CD8-positive, alpha-beta T cell (primary cell): ENCODE measurements at regions of chr9 and their contacts with region 1.

Region 1: GRCh38 chr9:121369595-121370265 is at the start of gene STOM:
- DNase-seq: peak in 8 of 9 experiments; percentile 35 to 87 (median 68)
- ATAC-seq: peak; percentile 53
- H3K4me3 ChIP-seq: peak within 1 kb of the TSS; percentile 86 to 96
- H3K4me3 Mint-ChIP-seq: peak within 1 kb of the TSS; percentile 92
- H3K27ac ChIP-seq: peak within 1 kb of the TSS; percentile 67 to 90
- H3K27ac Mint-ChIP-seq: peak within 1 kb of the TSS; percentile 90
- H3K4me1 ChIP-seq: peaks cover 11% of the 10 kb centered on the region
- H3K4me1 Mint-ChIP-seq: peaks cover 66% of the 10 kb centered on the region
- H3K27me3 ChIP-seq: no peaks in the 10 kb centered on the region
- H3K27me3 Mint-ChIP-seq: no peaks in the 10 kb centered on the region
- CTCF ChIP-seq: no peak
- total RNA-seq, gene STOM: 47.4 to 48.2 TPM

Region 2: DNA sequence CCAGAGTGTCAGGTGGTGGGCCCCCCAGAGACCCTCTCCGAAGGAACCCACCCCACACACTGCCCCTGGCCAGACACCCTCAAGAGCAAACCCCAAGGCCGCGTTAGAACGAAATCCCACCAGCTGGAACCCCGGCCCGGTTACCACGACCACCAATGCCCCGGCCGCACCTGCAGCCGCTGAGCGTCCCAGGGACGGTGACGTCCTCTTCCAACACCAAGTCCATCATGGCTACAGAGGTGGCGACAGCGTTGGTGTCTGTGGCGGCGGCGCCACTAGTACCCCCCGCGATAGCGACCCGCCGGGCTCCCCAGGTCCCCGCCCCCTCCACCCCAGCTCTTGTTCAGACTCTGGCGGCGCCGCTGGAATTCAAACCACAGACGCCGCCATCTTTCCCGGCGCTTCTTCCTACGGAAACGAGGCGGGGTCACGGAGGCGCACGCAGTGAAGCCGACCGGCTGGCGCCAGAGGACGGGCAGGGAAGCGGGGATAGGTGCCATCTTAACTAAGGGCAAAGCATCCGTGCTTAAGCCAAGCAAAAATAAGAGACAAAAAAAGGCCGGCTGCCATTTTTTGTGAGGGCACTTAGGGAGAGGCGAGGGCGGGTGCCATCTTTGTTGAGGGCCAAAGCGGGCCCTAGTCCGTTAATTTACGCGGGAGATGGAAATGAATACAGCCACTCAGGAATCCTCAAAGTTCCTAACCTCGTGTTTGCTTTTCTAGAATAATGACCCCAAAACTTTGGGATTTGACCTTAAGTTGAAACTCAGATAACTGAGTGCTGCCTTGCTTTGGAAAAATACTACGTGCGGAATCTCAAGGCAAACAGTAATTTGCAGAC is 789.8 kb before region 1 on chr9 and contains the start of gene CDK5RAP2:
- CTCF ChIA-PET with region 1: no interaction called
- POLR2A ChIA-PET with region 1: no interaction called
- intact Hi-C with region 1: loop called in 1 of 2 experiments (anchors 2 kb)
- DNase-seq: peak; percentile 83 to 98 (median 91)
- ATAC-seq: peak; percentile 98
- H3K4me3 ChIP-seq: peak within 1 kb of the TSS; percentile 63 to 86
- H3K4me3 Mint-ChIP-seq: peak within 1 kb of the TSS; percentile 92
- H3K27ac ChIP-seq: peak within 1 kb of the TSS; percentile 68 to 77
- H3K27ac Mint-ChIP-seq: peak within 1 kb of the TSS; percentile 95
- H3K4me1 ChIP-seq: peaks cover 25% of the 10 kb centered on the region
- H3K4me1 Mint-ChIP-seq: peaks cover 56% of the 10 kb centered on the region
- H3K27me3 ChIP-seq: no peaks in the 10 kb centered on the region
- H3K27me3 Mint-ChIP-seq: no peaks in the 10 kb centered on the region
- CTCF ChIP-seq: no peak
- total RNA-seq, gene CDK5RAP2: 52.1 to 55.2 TPM

Region 3: DNA sequence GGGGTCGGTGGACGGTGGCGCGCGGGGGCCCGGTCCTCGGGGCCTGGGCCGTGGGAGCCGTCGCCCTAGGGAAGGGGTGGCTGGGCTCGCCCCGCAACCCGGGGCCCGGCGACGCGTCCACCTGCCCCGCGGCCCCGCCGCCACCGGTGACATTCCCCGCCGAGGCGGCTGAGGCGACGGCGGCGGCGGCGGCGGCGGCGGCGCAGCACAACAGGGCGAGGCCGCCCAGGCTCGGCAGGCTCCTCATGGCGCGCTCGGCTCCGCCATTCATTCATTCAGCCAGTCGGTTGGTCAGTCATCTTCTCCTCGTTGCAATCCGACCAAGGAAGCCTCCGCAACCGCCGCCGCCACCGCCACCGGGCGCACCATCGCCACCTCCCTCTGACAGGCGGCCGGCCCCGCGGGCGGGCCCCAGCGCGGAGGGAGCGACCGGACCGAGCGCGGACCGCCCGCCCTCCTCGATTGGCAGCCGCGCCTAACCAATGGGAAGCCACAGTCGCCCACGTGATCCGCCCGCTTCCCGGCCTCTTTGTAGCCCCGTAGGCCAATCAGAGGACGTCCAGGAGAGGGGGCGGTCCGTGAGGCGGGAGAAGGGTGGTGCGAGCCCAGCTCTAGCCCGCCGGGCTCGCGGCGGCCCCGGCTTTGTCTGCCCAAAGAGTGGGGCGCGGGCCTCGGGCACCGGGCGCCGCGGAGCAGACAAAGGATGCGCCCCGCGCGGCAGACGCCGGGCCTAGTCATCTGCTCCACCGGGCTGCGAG is 655.5 kb before region 1 on chr9 and contains the start of gene MEGF9:
- CTCF ChIA-PET with region 1: no interaction called
- POLR2A ChIA-PET with region 1: no interaction called
- intact Hi-C with region 1: loop called in 1 of 2 experiments (anchors 2 kb)
- DNase-seq: peak; percentile 89 to 98 (median 96)
- ATAC-seq: peak; percentile 94
- H3K4me3 ChIP-seq: peak within 1 kb of the TSS; percentile 69 to 92
- H3K4me3 Mint-ChIP-seq: peak within 1 kb of the TSS; percentile 83
- H3K27ac ChIP-seq: peak within 1 kb of the TSS; percentile 61 to 64
- H3K27ac Mint-ChIP-seq: peak within 1 kb of the TSS; percentile 86
- H3K4me1 ChIP-seq: peaks cover 38% of the 10 kb centered on the region
- H3K4me1 Mint-ChIP-seq: peaks cover 35% of the 10 kb centered on the region
- H3K27me3 ChIP-seq: no peaks in the 10 kb centered on the region
- H3K27me3 Mint-ChIP-seq: no peaks in the 10 kb centered on the region
- CTCF ChIP-seq: no peak
- total RNA-seq, gene MEGF9: 3.0 to 3.1 TPM

Region 4: DNA sequence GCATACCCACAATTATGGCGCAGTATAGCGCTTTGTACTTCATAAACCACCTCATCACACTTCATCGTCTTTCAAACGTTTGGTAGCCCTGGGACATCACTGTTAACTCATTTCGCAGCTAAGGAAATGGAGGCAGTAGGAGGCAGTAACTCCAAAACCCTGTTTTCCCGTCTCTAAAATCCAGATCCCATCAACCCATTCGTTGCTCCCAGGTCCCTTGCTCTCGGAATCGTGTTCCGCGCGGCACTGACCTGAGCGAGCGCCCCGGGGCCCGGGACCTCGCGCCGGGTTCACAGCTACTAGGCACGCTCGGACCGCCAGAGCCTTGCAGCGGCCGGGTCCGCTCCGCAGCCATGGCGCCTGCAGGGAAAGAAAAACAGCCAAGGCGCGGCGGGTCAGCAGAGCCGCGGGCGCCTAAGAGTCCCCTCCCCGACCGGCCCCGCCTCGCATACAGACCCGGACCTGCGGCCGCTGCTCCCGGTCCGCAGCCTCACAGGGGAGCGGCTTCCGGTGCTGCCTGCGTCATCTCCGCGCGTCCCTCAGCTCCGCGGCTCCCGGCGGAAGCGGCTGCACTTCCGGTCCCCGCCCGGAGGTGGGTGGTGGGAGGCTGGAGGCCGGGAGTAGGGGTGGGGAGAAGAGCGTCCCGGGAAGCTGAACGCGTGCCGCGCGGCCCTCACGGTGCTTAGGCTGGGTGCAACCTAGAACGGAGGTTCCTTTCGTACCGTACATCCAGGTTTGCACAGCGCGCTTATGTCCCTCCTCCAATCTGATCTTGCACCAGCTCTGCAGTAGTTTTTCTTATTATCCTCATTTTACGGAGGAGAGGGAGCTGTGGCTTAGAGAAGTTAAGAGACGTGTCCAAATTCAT is 576.6 kb before region 1 on chr9 and contains the start of gene FBXW2:
- CTCF ChIA-PET with region 1: no interaction called
- POLR2A ChIA-PET with region 1: no interaction called
- intact Hi-C with region 1: loop called in 1 of 2 experiments (anchors 1 kb)
- DNase-seq: peak; percentile 50 to 93 (median 84)
- ATAC-seq: peak; percentile 81
- H3K4me3 ChIP-seq: peak within 1 kb of the TSS; percentile 60 to 88
- H3K4me3 Mint-ChIP-seq: peak within 1 kb of the TSS; percentile 85
- H3K27ac ChIP-seq: peak within 1 kb of the TSS; percentile 88 to 90
- H3K27ac Mint-ChIP-seq: peak within 1 kb of the TSS; percentile 87
- H3K4me1 ChIP-seq: peaks cover 26% of the 10 kb centered on the region
- H3K4me1 Mint-ChIP-seq: peaks cover 60% of the 10 kb centered on the region
- H3K27me3 ChIP-seq: no peaks in the 10 kb centered on the region
- H3K27me3 Mint-ChIP-seq: no peaks in the 10 kb centered on the region
- CTCF ChIP-seq: no peak
- total RNA-seq, gene FBXW2: 51.9 to 54.7 TPM

Region 5: GRCh38 chr9:121201738-121202533 is 167.8 kb before region 1 on chr9 and contains the start of gene RAB14:
- CTCF ChIA-PET with region 1: no interaction called
- POLR2A ChIA-PET with region 1: no interaction called
- intact Hi-C with region 1: loop called (anchors 1 to 5 kb)
- DNase-seq: peak; percentile 100
- ATAC-seq: peak; percentile 90
- H3K4me3 ChIP-seq: peak within 1 kb of the TSS; percentile 77 to 79
- H3K4me3 Mint-ChIP-seq: peak within 1 kb of the TSS; percentile 96
- H3K27ac ChIP-seq: peak within 1 kb of the TSS; percentile 79 to 82
- H3K27ac Mint-ChIP-seq: peak within 1 kb of the TSS; percentile 97
- H3K4me1 ChIP-seq: peaks cover 41% of the 10 kb centered on the region
- H3K4me1 Mint-ChIP-seq: peaks cover 53% of the 10 kb centered on the region
- H3K27me3 ChIP-seq: no peaks in the 10 kb centered on the region
- H3K27me3 Mint-ChIP-seq: no peaks in the 10 kb centered on the region
- CTCF ChIP-seq: no peak
- total RNA-seq, gene RAB14: 58.8 to 60.4 TPM

Region 6: DNA sequence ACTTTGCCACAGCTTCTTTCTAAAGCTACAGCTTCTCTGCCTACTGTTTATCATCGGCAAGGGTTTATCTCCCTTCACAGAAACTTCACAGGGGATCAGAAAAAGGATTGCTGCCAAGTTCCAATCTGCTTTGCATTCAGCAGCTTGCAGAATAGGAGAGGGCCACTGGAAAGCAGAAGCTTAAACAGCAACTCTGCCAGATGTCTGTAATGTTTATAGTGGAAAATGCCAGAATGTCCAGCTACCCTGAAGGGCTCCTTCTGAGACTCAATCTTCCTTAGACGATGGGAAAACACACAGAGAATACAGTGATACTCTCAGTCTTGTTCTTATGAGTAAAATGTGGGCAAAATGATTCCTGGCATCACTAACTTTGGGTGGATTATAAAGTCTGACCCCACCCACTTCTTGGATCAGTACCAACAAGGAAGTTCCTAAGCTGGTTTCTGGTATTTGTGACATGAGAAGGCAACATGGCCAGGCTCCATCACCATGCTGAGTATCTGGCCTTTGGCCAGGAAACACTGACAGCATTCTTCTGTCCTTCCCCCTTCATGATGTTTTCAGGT is 18.7 kb before region 1 on chr9:
- CTCF ChIA-PET with region 1: interaction called, 4 read pairs
- POLR2A ChIA-PET with region 1: interaction called, 8 read pairs
- intact Hi-C with region 1: loop called (anchors 1 kb)
- DNase-seq: no peak
- ATAC-seq: no peak
- H3K4me3 ChIP-seq: no peak overlapping the region
- H3K4me3 Mint-ChIP-seq: no peak overlapping the region
- H3K27ac ChIP-seq: no peak overlapping the region
- H3K27ac Mint-ChIP-seq: no peak overlapping the region
- H3K4me1 ChIP-seq: peaks cover 23% of the 10 kb centered on the region
- H3K4me1 Mint-ChIP-seq: peaks cover 37% of the 10 kb centered on the region
- H3K27me3 ChIP-seq: no peaks in the 10 kb centered on the region
- H3K27me3 Mint-ChIP-seq: no peaks in the 10 kb centered on the region
- CTCF ChIP-seq: no peak

Region 7: GRCh38 chr9:122036988-122037387 is 667.3 kb after region 1 on chr9:
- CTCF ChIA-PET with region 1: no interaction called
- POLR2A ChIA-PET with region 1: no interaction called
- intact Hi-C with region 1: no loop called
- DNase-seq: no peak
- ATAC-seq: no peak
- H3K4me3 ChIP-seq: no peak overlapping the region
- H3K4me3 Mint-ChIP-seq: no peak overlapping the region
- H3K27ac ChIP-seq: no peak overlapping the region
- H3K27ac Mint-ChIP-seq: no peak overlapping the region
- H3K4me1 ChIP-seq: no peaks in the 10 kb centered on the region
- H3K4me1 Mint-ChIP-seq: no peaks in the 10 kb centered on the region
- H3K27me3 ChIP-seq: no peaks in the 10 kb centered on the region
- H3K27me3 Mint-ChIP-seq: no peaks in the 10 kb centered on the region
- CTCF ChIP-seq: no peak